Mammary epithelial cell (primary cell): ENCODE measurements at regions of chr7 and their contacts with region 1.

Region 1: DNA sequence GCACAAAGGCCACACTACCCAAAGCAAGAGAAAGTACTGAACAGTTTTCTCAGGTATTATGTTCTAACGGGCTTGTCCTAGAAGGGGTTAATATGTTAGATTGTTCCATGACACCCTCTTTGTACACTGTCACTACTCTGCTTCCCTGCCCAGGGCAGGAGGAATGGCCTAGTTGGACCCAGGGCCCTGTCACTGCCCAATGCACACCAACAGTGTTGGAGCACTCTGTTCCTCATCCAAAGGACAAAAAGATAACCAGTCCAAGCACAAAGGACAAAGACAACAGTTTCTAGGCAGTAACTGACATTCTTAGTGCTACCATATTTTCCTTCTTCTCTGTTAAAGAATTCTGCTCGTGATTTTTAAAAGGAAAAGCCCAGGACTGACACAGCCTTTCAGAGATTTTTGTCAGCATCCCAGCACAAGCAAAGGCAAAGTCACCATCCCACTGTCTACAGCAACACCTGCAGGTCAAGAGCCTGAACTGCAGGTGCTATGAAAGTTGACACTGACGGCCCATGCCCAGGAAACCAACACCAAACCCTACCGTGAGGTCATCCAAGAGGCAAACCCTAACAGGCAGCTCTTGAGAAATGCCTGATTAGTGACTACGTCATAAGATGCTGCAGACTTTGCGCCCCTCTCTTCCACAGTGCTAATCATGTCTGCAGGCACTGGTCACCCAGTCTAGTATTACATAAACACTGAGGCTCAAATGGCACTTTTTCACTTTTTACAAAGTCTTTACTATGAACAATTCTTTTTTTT is 13.2 kb downstream of the NUDCD3 start:
- DNase-seq: peak; percentile 85
- H3K4me3 ChIP-seq: no peak overlapping the region
- H3K27ac ChIP-seq: no peak overlapping the region
- H3K4me1 ChIP-seq: peaks cover 25% of the 10 kb centered on the region
- H3K27me3 ChIP-seq: no peaks in the 10 kb centered on the region
- CTCF ChIP-seq: peak; percentile 98 to 99

Region 2: GRCh38 chr7:44218418-44219201 is 258.6 kb before region 1 on chr7:
- CTCF ChIA-PET with region 1: interaction called, 4 read pairs
- dilution Hi-C with region 1: no loop called
- in situ Hi-C with region 1: no loop called
- intact Hi-C with region 1: loop called (anchors 1 kb)
- DNase-seq: no peak
- H3K4me3 ChIP-seq: no peak overlapping the region
- H3K27ac ChIP-seq: no peak overlapping the region
- H3K4me1 ChIP-seq: no peaks in the 10 kb centered on the region
- H3K27me3 ChIP-seq: no peaks in the 10 kb centered on the region
- CTCF ChIP-seq: no peak

Region 3: GRCh38 chr7:44307301-44307900 is 169.8 kb before region 1 on chr7:
- CTCF ChIA-PET with region 1: no interaction called
- dilution Hi-C with region 1: no loop called
- in situ Hi-C with region 1: no loop called
- intact Hi-C with region 1: loop called (anchors 1 kb)
- DNase-seq: peak; percentile 33
- H3K4me3 ChIP-seq: no peak overlapping the region
- H3K27ac ChIP-seq: peak overlapping the region; percentile 58
- H3K4me1 ChIP-seq: peaks cover 18% of the 10 kb centered on the region
- H3K27me3 ChIP-seq: no peaks in the 10 kb centered on the region
- CTCF ChIP-seq: peak; percentile 27 to 44

Region 4: GRCh38 chr7:44375236-44375699 is 102.0 kb before region 1 on chr7:
- CTCF ChIA-PET with region 1: no interaction called
- dilution Hi-C with region 1: no loop called
- in situ Hi-C with region 1: no loop called
- intact Hi-C with region 1: loop called (anchors 10 kb)
- DNase-seq: no peak
- H3K4me3 ChIP-seq: no peak overlapping the region
- H3K27ac ChIP-seq: no peak overlapping the region
- H3K4me1 ChIP-seq: peaks cover 44% of the 10 kb centered on the region
- H3K27me3 ChIP-seq: no peaks in the 10 kb centered on the region
- CTCF ChIP-seq: peak in 1 of 2 donors; percentile 2

Region 5: GRCh38 chr7:44460325-44460724 is 16.9 kb before region 1 on chr7:
- CTCF ChIA-PET with region 1: no interaction called
- dilution Hi-C with region 1: no loop called
- in situ Hi-C with region 1: no loop called
- intact Hi-C with region 1: no loop called
- DNase-seq: peak; percentile 30
- H3K4me3 ChIP-seq: no peak overlapping the region
- H3K27ac ChIP-seq: no peak overlapping the region
- H3K4me1 ChIP-seq: peaks cover 20% of the 10 kb centered on the region
- H3K27me3 ChIP-seq: no peaks in the 10 kb centered on the region
- CTCF ChIP-seq: no peak

Region 6: GRCh38 chr7:44565097-44565794 is 88.0 kb after region 1 on chr7:
- CTCF ChIA-PET with region 1: interaction called, 3 read pairs
- dilution Hi-C with region 1: no loop called
- in situ Hi-C with region 1: no loop called
- intact Hi-C with region 1: loop called (anchors 1 kb)
- DNase-seq: peak; percentile 42
- H3K4me3 ChIP-seq: no peak overlapping the region
- H3K27ac ChIP-seq: no peak overlapping the region
- H3K4me1 ChIP-seq: no peaks in the 10 kb centered on the region
- H3K27me3 ChIP-seq: no peaks in the 10 kb centered on the region
- CTCF ChIP-seq: peak; percentile 98 to 99